Naive thymus-derived CD8-positive, alpha-beta T cell (primary cell): ENCODE measurements at regions of chr9 and their contacts with region 1.

Region 1: GRCh38 chr9:89536145-89536574 is 38.2 kb upstream of the SEMA4D start:
- DNase-seq: peak in 4 of 10 donors; percentile 43 to 84 (median 80)
- ATAC-seq: peak; percentile 72 to 85
- H3K4me3 Mint-ChIP-seq: peak overlapping the region; percentile 47 to 89 (median 76)
- H3K27ac Mint-ChIP-seq: peak overlapping the region; percentile 83 to 97 (median 94)
- H3K4me1 Mint-ChIP-seq: peaks cover 64 to 97% (median 95%) of the 10 kb centered on the region in 4 donors
- H3K27me3 Mint-ChIP-seq: no peaks in the 10 kb centered on the region

Region 2: DNA sequence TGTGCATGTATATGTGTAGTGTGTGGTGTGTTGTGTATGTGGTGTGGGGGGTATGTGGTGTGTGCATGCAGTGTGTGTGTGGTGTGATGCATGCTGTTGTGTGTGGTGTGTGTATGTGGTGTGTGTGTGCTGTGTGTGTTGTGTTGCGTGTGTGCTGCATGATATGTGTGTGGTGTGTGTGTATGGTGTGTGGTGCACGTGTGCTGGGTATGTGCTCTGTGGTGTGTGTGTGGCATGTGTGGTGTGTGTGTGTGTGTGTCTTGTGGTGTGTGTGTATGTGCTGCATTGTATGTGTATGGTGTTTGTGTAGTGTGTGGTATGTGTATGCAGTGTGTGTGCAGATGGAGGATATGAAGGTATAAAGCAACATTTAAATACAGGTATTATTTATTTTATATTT is 275.6 kb before region 1 on chr9:
- POLR2A ChIA-PET with region 1: no interaction called
- DNase-seq: no peak
- ATAC-seq: no peak
- H3K4me3 Mint-ChIP-seq: no peak overlapping the region
- H3K27ac Mint-ChIP-seq: no peak overlapping the region
- H3K4me1 Mint-ChIP-seq: no peaks in the 10 kb centered on the region
- H3K27me3 Mint-ChIP-seq: peaks cover 0 to 2% (median 0%) of the 10 kb centered on the region in 5 donors

Region 3: DNA sequence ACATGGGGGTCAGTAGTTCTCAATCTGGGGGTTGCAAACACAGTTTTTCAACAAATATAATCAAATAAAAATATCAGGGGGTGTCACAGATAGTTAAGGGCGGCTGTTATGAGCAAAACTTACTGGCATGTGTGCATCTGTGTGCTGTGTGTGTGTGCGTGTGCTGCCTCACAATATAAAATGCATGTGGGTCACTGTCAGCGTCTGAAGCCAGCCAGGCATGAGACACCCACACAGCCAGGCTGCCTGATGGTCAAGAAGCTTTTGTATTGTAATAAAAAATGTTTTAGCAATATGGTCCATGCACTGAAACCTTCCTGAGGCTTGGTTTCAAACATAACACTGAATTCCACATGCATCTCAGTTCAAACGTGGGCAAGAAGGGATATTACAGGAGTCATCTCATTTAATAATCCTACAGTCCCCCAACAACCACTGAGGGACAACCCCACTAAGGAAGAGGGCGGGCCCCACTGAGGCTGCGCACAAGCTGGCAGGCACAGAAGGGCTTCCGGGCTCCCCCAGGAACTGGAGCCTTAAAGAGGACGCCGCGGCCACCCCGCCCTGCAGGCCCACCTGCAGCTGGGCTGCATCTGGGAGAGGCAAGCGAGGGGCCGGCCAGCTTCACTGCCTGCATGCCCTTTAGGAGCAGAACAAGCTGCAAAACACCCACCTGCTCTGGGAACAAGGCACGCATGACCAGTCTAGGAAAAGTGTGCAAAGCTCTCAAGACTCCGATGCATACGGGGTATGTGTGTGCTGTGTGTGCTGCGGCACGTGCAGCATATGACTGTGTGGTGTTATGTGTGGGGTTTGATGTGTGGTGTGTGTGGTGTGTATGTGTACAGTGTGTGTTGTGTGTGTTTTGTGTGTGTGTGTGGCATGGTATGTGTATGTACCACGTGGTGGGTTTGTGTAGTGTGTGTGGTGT is 52.3 kb before region 1 on chr9:
- POLR2A ChIA-PET with region 1: interaction called, 15 read pairs
- DNase-seq: peak; percentile 65 to 89 (median 73)
- ATAC-seq: peak; percentile 71 to 84
- H3K4me3 Mint-ChIP-seq: peak overlapping the region; percentile 73 to 99 (median 95)
- H3K27ac Mint-ChIP-seq: peak overlapping the region; percentile 94 to 99 (median 95)
- H3K4me1 Mint-ChIP-seq: peaks cover 56 to 93% (median 91%) of the 10 kb centered on the region in 4 donors
- H3K27me3 Mint-ChIP-seq: no peaks in the 10 kb centered on the region

Region 4: DNA sequence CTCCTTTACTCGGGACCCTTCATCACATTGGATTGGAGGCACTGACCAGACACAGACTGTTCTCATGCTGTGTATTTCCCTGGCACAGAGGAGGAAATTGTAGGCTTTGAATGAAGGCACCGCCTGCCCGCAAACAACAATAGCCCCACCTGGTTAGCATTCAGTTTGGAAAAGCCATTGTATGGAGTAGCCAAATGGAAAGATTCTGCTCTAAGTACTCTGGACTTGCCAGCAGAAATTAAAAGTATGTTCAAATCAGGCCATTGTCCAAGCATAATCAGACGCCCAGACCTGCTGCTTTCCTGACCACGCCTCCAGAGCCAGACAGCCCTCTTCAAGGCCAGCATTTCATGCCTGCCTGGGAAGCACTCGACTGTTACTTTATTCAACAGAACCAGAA is 30.2 kb before region 1 on chr9:
- POLR2A ChIA-PET with region 1: interaction called, 63 read pairs
- DNase-seq: no peak
- ATAC-seq: no peak
- H3K4me3 Mint-ChIP-seq: peak overlapping the region in 3 of 10 donors; percentile 7 to 67 (median 16)
- H3K27ac Mint-ChIP-seq: peak overlapping the region in 8 of 10 donors; percentile 45 to 93 (median 78)
- H3K4me1 Mint-ChIP-seq: peaks cover 57 to 94% (median 92%) of the 10 kb centered on the region in 4 donors
- H3K27me3 Mint-ChIP-seq: no peaks in the 10 kb centered on the region

Region 5: DNA sequence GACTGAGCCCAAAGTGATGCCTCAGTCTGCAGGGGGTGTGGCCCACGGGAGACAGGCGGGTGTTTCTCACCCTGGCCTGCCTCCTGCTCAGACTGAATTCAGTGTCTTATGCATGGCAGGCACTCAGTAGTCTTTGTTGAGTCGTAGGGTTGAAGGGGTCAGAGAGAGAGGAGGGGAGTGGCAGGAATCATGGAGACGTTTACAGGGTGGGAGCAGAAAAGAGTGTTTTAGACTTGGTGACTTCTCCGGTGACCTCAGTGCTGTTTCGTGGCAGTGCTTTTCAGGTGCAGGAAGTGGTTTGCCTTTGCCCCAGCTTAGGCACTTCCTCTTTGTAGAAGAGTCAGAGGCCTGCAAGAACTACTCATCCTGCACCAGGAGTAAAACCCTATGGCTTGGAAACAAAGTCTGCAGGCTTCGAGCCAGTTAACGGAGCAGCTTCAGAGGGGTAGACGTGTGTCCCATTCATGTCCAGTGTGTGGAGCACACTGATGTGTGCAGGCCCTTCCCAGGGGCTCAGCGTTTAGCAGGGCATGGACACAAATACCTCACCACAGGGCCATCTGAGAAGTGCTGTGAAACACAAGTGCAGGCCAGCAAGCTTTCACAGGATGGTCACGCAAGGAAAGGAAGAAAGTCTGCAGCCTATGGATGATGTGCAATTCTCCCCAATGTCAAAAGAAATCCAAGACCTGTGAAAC is 13.8 kb before region 1 on chr9:
- POLR2A ChIA-PET with region 1: interaction called, 35 read pairs
- DNase-seq: peak; percentile 41 to 90 (median 81)
- ATAC-seq: peak; percentile 84 to 89
- H3K4me3 Mint-ChIP-seq: peak overlapping the region; percentile 49 to 87 (median 75)
- H3K27ac Mint-ChIP-seq: peak overlapping the region; percentile 87 to 98 (median 96)
- H3K4me1 Mint-ChIP-seq: peaks cover 56 to 99% (median 94%) of the 10 kb centered on the region in 4 donors
- H3K27me3 Mint-ChIP-seq: no peaks in the 10 kb centered on the region